AG04450 (cell line): ENCODE measurements at regions of chr2 and their contacts with region 1.

Region 1: DNA sequence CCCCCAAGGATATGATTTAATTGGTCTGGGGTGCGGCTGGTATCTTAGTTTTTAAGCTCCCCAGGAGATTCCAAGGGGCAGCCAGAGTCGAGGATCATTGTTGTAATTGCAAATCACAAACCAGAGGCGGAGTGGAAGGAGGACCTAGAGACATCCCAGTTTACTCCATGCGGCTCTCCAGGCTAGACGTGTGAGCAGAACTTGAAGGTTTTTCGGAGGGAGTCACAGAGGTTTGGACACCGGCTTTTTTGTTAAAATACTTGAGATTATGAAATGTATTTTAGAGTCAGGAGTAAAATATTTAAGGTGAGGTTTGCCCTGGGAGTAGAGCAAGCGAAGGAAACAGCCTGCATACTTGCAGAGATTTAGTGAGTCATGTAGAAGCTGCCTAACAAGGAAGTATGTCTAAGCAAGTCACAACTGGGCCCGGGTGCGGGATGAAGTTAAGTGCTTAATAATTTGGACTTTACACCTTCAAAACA is 39.5 kb downstream of the TGOLN2 start:
- DNase-seq: no peak
- H3K4me3 ChIP-seq: no peak overlapping the region
- H3K27ac ChIP-seq: peak overlapping the region; percentile 47
- H3K27me3 ChIP-seq: no peaks in the 10 kb centered on the region
- CTCF ChIP-seq: no peak

Region 2: GRCh38 chr2:85066874-85067351 is 221.4 kb before region 1 on chr2:
- CTCF ChIA-PET with region 1: interaction called, 108 read pairs
- POLR2A ChIA-PET with region 1: interaction called, 3 read pairs
- DNase-seq: peak; percentile 74
- H3K4me3 ChIP-seq: peak overlapping the region; percentile 43
- H3K27ac ChIP-seq: no peak overlapping the region
- H3K27me3 ChIP-seq: peaks cover 3% of the 10 kb centered on the region
- CTCF ChIP-seq: peak; percentile 91

Region 3: DNA sequence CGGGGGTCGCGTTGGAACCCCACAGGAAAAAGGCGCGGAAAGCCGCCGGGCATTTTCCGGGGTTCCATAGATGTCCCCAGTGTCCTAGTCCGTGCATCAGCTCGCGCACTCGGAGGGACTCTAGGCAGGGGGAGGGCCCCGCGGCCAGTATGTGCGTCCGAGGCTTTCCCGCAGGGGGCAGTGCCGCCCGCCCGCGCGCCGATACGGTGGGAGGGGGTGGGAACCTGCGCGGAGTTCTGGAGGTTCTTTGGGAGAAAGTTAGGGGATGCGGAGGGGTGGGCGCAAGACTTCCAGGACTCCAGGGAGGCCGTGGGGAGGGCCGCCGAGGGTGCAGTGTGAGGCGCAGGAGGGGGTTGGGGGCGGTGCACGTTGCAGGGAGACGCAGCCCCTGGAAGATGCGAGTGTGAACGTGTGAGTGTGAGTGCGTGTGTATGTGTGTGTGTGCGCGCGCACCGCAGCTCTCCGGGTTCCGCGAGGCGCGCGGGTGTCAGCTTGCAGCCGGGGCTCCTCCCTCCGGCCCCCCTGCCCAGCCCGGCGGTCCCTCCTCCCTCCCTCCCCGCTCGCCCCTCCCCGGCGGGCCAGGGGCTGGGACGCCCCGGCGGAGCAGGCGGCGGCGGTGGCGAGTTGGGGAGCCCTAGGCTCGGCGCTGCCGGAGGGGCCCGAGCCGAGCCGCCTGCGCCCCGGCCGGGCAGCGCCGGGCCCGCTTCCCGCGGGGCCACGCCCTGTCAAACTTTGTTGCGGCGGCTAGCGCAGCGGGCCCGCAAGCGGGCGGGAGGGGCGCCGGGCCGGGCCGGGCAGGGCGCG is 155.2 kb before region 1 on chr2 and contains the start of gene TCF7L1:
- CTCF ChIA-PET with region 1: interaction called, 71 read pairs
- POLR2A ChIA-PET with region 1: interaction called, 4 read pairs
- DNase-seq: peak; percentile 72
- H3K4me3 ChIP-seq: peak within 1 kb of the TSS; percentile 93
- H3K27ac ChIP-seq: peak within 1 kb of the TSS; percentile 39
- H3K27me3 ChIP-seq: no peaks in the 10 kb centered on the region
- CTCF ChIP-seq: peak; percentile 91
- polyA plus RNA-seq, gene TCF7L1: 2.7 and 3.5 TPM in 2 replicates

Region 4: GRCh38 chr2:85162746-85163301 is 125.5 kb before region 1 on chr2:
- CTCF ChIA-PET with region 1: interaction called, 15 read pairs
- POLR2A ChIA-PET with region 1: no interaction called
- DNase-seq: peak; percentile 39
- H3K4me3 ChIP-seq: 0 out of 2 replicates have a peak overlapping the region, but pooled peaks have one; percentile 7
- H3K27ac ChIP-seq: peak overlapping the region; percentile 52
- H3K27me3 ChIP-seq: no peaks in the 10 kb centered on the region
- CTCF ChIP-seq: 0 out of 2 replicates have a peak, but pooled peaks have one; percentile 13

Region 5: DNA sequence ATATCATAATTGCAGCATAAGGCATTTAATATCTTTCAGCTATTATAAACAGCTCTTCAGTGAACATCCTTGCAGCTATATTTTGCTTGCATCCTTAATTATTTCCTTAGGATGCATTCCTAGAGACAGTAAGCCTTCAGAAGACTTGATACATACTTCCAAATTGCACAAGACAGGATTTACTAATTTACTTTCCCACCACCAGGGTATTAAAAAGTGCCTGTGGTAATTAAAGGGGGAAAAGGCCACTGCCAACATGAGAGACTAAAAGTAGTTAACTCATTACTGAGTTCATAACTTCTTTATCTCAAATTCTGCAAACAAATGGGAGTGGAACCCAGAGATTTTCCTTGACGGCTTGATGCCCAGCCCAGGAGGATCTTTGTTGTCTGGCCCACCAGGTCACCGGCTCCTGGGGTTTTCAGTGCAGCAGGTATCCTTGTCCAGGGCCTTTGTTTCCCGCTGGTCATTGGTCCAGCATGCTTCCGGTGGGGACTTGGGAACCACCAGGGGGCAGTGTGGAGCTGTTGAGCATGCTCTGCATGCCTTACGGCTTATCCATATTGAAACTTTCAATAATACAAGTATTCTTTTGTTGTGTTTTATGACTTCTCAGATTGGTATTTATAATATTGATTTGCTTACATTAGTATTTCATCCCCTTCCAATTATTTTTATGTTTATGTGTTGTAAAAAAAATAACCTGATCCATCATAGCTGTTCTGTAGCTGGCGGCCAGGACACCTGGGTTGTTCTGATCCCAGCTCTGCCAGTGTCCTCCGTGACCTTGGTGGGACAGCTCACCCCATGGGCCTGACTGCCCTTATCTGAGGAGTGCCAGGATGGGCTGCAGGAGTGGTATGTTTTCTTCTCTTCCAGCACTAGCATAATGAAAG is 21.9 kb before region 1 on chr2:
- CTCF ChIA-PET with region 1: interaction called, 12 read pairs
- POLR2A ChIA-PET with region 1: no interaction called
- DNase-seq: no peak
- H3K4me3 ChIP-seq: no peak overlapping the region
- H3K27ac ChIP-seq: no peak overlapping the region
- H3K27me3 ChIP-seq: no peaks in the 10 kb centered on the region
- CTCF ChIP-seq: peak; percentile 82